Aorta (tissue), 5 donors: ENCODE measurements at regions of chr4 and their contacts with region 1.

Region 1: DNA sequence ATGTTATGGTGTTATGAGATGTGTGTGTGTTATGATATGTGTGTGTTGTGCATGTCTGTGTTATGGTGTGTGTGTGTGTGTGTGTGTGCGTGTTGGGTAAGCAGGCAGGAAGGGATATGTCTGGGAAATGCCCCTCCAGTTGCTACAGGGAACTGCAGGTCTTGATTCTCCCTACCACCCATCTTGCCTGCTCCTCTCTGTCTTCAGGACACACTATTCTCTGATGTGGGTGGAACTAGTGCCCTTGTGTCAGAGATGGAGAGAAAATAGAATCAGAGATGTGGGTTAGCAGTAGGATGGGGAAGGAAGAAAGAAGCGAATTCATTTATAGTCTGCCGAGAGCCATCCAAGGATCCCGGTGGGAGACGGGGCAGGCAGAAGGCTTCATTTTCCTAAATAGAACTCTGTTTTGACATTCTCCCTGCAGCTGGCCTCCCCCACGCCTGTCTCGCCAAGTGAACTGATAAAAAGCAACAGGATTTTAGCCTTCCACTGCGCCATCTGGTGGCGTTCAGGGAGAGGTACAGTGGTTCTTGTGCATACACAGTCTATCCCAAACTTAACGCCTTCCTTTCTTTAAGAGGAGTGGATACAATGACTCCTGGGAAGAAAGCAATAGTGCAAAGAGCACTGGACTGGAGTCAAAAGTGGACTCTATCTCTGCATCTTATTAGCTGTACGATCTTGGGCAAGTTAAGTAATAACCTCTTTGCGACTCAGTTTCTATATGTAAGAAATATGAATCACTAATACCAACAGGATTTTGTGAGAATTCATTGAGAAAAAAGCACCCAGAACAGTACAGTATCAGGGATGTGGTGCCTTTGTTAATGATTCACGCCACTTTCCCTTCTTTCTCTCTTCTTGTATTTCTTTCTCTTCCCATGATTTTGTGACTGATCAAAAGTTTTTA is 14.1 kb upstream of the MGST2 start:
- DNase-seq: peak; percentile 89 to 92
- ATAC-seq: peak; percentile 91
- H3K4me3 ChIP-seq: no peak overlapping the region
- H3K27ac ChIP-seq: no peak overlapping the region
- H3K4me1 ChIP-seq: no peaks in the 10 kb centered on the region
- H3K27me3 ChIP-seq: no peaks in the 10 kb centered on the region

Region 2: DNA sequence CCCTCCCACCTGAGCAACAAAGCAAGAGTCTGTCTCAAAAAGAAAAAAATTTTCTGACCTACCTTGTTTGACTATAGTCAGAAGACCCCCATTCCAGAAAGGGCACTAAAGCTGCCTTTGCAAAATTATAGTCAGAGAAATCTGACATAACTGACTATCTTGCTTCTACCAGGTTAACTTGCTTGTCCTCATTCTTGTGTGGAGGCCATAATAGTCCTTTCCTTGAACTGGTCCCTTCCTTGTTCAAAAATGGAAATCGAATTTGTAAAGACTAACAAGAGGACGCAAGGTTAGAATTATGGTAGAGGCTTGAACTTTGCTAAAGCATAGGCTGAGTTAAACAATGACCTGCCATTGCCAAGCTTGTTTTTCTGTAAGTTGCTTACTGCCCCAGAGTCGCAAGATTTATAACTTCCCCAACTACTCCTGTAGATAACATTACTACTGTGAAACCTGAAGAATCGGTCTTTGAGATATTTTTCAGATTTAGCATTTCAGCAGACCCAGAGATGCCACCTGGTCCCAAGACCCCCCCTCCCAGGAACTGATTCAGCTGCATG is 152.4 kb before region 1 on chr4:
- intact Hi-C with region 1: loop called in 1 of 2 experiments (anchors 2 kb)
- DNase-seq: no peak
- ATAC-seq: no peak
- H3K4me3 ChIP-seq: no peak overlapping the region
- H3K27ac ChIP-seq: no peak overlapping the region
- H3K4me1 ChIP-seq: no peaks in the 10 kb centered on the region
- H3K27me3 ChIP-seq: peaks cover 0 to 2% of the 10 kb centered on the region in 2 donors

Region 3: DNA sequence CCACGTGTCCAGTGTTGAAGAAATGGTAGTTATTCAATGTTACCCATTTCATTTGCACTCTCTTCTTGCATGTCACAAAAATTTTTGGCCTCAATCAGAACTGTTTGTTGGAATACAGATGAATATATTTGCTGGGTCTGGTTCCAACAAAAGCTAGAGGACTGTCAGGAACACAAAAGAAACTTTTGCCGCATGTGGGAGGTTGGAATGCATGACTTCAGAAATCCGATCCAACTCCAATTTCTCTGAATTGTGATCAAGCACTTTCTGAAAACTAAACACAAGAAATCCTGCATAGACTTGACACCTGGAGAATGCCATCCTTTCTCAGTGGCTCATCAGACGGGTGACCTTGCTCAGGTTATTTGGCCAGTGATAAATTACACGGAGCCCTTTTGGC is 110.9 kb before region 1 on chr4:
- intact Hi-C with region 1: no loop called
- DNase-seq: no peak
- ATAC-seq: no peak
- H3K4me3 ChIP-seq: no peak overlapping the region
- H3K27ac ChIP-seq: no peak overlapping the region
- H3K4me1 ChIP-seq: peaks cover 2 to 5% of the 10 kb centered on the region in 2 donors
- H3K27me3 ChIP-seq: no peaks in the 10 kb centered on the region

Region 4: GRCh38 chr4:139603576-139604387 is 47.8 kb before region 1 on chr4:
- intact Hi-C with region 1: loop called (anchors 1 to 5 kb)
- DNase-seq: no peak
- ATAC-seq: no peak
- H3K4me3 ChIP-seq: no peak overlapping the region
- H3K27ac ChIP-seq: no peak overlapping the region
- H3K4me1 ChIP-seq: no peaks in the 10 kb centered on the region
- H3K27me3 ChIP-seq: no peaks in the 10 kb centered on the region